ENCODE measurements at regions of chr12 and their contacts with region 1.

Region 1: GRCh38 chr12:34033628-34034282 is 11.5 kb downstream of the ALG10 start:
- DNase-seq: no peak
- H3K4me3 Mint-ChIP-seq: no peak overlapping the region
- H3K27ac Mint-ChIP-seq: no peak overlapping the region
- H3K4me1 Mint-ChIP-seq: no peaks in the 10 kb centered on the region
- H3K27me3 Mint-ChIP-seq: no peaks in the 10 kb centered on the region
- CTCF ChIP-seq: peak; percentile 56

Region 2: GRCh38 chr12:33724867-33725266 is 308.9 kb before region 1 on chr12:
- CTCF ChIA-PET with region 1: no interaction called
- intact Hi-C with region 1: no loop called
- DNase-seq: no peak
- H3K4me3 Mint-ChIP-seq: no peak overlapping the region
- H3K27ac Mint-ChIP-seq: no peak overlapping the region
- H3K4me1 Mint-ChIP-seq: no peaks in the 10 kb centered on the region
- H3K27me3 Mint-ChIP-seq: no peaks in the 10 kb centered on the region
- CTCF ChIP-seq: no peak

Region 3: GRCh38 chr12:34016361-34016760 is 17.4 kb before region 1 on chr12:
- CTCF ChIA-PET with region 1: no interaction called
- intact Hi-C with region 1: no loop called
- DNase-seq: no peak
- H3K4me3 Mint-ChIP-seq: no peak overlapping the region
- H3K27ac Mint-ChIP-seq: no peak overlapping the region
- H3K4me1 Mint-ChIP-seq: no peaks in the 10 kb centered on the region
- H3K27me3 Mint-ChIP-seq: no peaks in the 10 kb centered on the region
- CTCF ChIP-seq: no peak

Region 4: DNA sequence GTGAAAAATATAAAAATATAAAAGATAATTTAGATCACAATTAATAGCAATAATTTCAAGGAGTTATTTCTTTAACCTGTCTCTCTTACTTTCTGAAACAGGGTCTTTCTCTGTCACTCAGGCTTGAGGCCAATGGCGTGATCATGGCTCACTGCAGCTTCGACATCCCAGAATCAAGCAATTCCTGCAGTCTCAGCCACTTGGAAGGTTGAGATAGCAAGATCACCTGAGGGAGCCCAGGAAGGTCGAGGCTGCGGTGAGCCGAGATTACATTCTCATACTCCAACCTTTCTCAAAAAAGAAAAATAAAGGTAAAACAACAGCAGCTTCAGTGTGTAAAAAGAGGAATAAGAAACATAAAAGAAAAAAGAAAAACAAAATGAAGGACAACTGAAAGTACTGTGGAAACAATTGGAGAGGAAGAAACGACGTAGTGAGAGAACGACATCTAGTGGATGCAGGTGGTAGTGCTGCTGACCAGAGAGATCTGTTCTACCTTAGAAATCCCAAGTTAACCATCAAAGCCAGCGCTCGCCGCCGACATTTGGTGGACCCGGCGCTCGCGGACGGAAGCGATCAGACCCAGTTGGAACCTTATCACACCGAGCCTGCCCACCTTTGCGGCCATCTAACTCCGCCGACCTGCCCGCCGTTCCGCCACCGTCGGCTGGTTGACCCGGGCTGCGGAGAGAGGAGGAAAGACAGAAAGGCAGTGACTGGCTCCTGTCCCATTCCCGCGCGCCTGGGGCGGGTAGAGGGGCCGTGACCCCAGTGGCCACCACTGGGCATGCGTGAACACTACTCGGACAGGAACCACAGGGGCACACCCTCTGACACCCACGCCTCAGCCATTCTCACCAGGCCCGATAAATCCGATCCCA is 184.7 kb after region 1 on chr12:
- CTCF ChIA-PET with region 1: no interaction called
- intact Hi-C with region 1: loop called (anchors 1 kb)
- DNase-seq: peak; percentile 76
- H3K4me3 Mint-ChIP-seq: peak overlapping the region; percentile 69
- H3K27ac Mint-ChIP-seq: peak overlapping the region; percentile 55
- H3K4me1 Mint-ChIP-seq: no peaks in the 10 kb centered on the region
- H3K27me3 Mint-ChIP-seq: no peaks in the 10 kb centered on the region
- CTCF ChIP-seq: peak; percentile 65

Region 5: DNA sequence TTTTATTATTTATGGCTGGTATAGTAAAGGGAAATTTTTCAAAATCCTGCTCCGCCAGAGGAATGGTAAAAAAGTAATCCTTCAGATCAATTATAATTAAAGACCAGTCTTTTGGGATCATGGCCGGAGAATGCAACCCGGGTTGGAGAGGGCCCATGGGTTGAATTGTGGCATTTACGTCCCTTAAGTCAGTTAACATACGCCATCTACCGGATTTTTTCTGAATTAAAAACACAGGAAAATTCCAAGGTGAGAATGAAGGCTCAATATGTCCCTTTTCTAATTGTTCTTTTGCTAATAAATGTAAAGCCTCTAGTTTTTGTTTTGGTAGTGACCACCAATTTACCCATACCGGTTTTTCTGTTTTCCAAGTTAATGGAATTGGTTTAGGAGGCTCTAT is 591.4 kb after region 1 on chr12:
- CTCF ChIA-PET with region 1: no interaction called
- intact Hi-C with region 1: loop called (anchors 2 kb)
- DNase-seq: peak; percentile 4
- H3K4me3 Mint-ChIP-seq: no peak overlapping the region
- H3K27ac Mint-ChIP-seq: no peak overlapping the region
- H3K4me1 Mint-ChIP-seq: no peaks in the 10 kb centered on the region
- H3K27me3 Mint-ChIP-seq: no peaks in the 10 kb centered on the region
- CTCF ChIP-seq: no peak